PC-9 (cell line): ENCODE measurements at regions of chr3 and their contacts with region 1.

Region 1: GRCh38 chr3:196287440-196288148 is at the start of gene PCYT1A:
- DNase-seq: peak; percentile 93 to 96
- H3K4me3 ChIP-seq: peak within 1 kb of the TSS; percentile 71
- H3K27ac ChIP-seq: peak within 1 kb of the TSS; percentile 81
- H3K4me1 ChIP-seq: peaks cover 19% of the 10 kb centered on the region
- H3K27me3 ChIP-seq: no peaks in the 10 kb centered on the region
- CTCF ChIP-seq: no peak
- total RNA-seq, gene PCYT1A: 74.4 and 91.2 TPM in 2 replicates

Region 2: DNA sequence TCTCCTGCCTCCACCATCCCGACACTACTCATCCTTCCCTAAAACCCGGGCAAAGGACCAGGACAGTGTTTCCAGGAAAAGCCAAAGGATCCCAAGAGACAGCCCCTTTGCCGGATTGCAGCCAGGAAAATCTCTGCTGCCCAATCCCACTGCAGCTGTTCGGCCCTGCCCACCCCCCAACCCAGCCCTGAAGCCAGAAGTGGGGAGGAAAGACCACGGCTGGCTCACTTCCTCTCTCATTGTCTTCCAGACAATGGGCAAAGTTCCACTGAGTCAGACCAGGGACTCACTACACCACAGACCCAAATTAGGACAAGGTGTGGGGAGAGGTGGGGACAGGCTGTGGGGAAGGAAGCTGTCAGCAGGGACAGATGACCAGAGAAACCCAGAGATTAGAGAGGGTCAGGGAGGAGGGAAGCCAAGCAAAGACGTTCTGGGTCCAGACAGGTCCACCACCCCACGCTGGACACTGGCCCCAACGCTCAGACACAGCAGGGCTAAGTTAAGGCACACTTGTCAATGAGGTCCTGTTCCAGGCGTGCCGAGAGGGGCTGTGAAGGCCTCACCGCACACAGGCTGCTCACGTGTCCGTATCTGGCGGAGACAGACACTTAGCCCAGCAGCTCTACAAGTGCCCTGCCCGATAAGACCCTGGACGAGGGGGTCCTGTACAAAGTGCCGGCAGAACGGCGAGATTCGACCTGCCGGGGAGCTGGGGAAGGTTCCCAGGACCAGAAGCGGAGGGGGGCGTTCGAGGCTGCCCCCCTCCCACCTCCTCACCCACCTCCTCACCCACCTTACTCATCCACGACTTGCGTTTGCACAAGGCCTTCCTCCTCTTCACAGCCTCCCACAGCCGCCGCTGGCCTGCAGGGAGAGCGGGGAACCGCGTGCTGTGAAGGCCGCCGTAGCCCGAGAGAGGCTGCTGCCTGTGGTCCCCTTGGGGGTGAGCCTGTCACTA is 401.1 kb before region 1 on chr3:
- CTCF ChIA-PET with region 1: no interaction called
- POLR2A ChIA-PET with region 1: interaction called, 11 read pairs
- intact Hi-C with region 1: no loop called
- DNase-seq: no peak
- H3K4me3 ChIP-seq: no peak overlapping the region
- H3K27ac ChIP-seq: no peak overlapping the region
- H3K4me1 ChIP-seq: no peaks in the 10 kb centered on the region
- H3K27me3 ChIP-seq: no peaks in the 10 kb centered on the region
- CTCF ChIP-seq: no peak

Region 3: GRCh38 chr3:196268270-196269163 is 19.1 kb before region 1 on chr3:
- CTCF ChIA-PET with region 1: interaction called, 8 read pairs
- POLR2A ChIA-PET with region 1: interaction called, 4 read pairs
- intact Hi-C with region 1: loop called (anchors 1 kb)
- DNase-seq: peak; percentile 65 to 83
- H3K4me3 ChIP-seq: no peak overlapping the region
- H3K27ac ChIP-seq: peak overlapping the region; percentile 69
- H3K4me1 ChIP-seq: peaks cover 19% of the 10 kb centered on the region
- H3K27me3 ChIP-seq: no peaks in the 10 kb centered on the region
- CTCF ChIP-seq: no peak